MCF 10A (cell line): ENCODE measurements at regions of chr2 and their contacts with region 1.

Region 1: GRCh38 chr2:26345545-26346453 is at the start of gene SELENOI:
- DNase-seq: peak; percentile 99
- H3K4me3 Mint-ChIP-seq: peak within 1 kb of the TSS; percentile 96
- H3K27ac Mint-ChIP-seq: peak within 1 kb of the TSS; percentile 97
- H3K4me1 Mint-ChIP-seq: peaks cover 17% of the 10 kb centered on the region
- H3K27me3 Mint-ChIP-seq: no peaks in the 10 kb centered on the region
- CTCF ChIP-seq: no peak
- total RNA-seq, gene SELENOI: 43.8 and 51.0 TPM in 2 replicates

Region 2: GRCh38 chr2:26251893-26252292 is 93.9 kb before region 1 on chr2:
- CTCF ChIA-PET with region 1: interaction called, 6 read pairs
- POLR2A ChIA-PET with region 1: interaction called, 272 read pairs
- intact Hi-C with region 1: loop called (anchors 5 kb)
- DNase-seq: no peak
- H3K4me3 Mint-ChIP-seq: no peak overlapping the region
- H3K27ac Mint-ChIP-seq: no peak overlapping the region
- H3K4me1 Mint-ChIP-seq: peaks cover 4% of the 10 kb centered on the region
- H3K27me3 Mint-ChIP-seq: no peaks in the 10 kb centered on the region
- CTCF ChIP-seq: no peak

Region 3: DNA sequence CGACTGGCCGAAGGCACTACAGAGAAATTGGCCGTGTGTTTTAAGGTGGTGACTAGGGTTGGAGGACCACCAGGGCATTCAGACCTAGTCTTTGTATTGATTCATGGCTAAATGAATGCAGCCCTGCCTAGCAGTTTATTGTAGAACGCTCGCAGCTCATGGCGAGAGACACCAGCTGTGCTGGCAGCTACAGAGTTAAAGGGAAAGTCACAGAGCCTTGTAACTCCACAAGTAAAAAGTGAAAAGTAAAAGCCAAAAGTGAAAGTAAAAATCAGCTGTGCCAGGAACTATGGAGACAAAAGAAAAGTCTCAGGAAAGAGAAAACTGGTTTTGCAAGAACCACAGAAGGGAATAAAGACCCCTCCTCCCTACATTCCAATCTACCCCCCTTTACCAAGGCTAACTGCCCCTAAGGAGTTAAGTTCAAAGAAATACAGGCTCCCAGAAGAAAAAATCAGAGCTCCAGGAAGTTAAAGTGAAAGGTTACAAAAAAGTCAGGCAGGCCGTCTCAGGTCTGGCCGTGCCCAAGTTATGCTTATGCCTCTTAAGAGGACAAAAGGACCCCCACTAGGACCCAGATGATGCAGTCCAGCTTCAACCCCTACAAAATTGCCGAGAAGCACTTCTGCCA is 46.2 kb before region 1 on chr2:
- CTCF ChIA-PET with region 1: interaction called, 3 read pairs
- POLR2A ChIA-PET with region 1: interaction called, 21 read pairs
- intact Hi-C with region 1: no loop called
- DNase-seq: peak; percentile 52
- H3K4me3 Mint-ChIP-seq: no peak overlapping the region
- H3K27ac Mint-ChIP-seq: no peak overlapping the region
- H3K4me1 Mint-ChIP-seq: peaks cover 13% of the 10 kb centered on the region
- H3K27me3 Mint-ChIP-seq: no peaks in the 10 kb centered on the region
- CTCF ChIP-seq: no peak

Region 4: GRCh38 chr2:26335231-26335630 is 10.6 kb before region 1 on chr2:
- CTCF ChIA-PET with region 1: interaction called, 6 read pairs
- POLR2A ChIA-PET with region 1: interaction called, 26 read pairs
- intact Hi-C with region 1: no loop called
- DNase-seq: no peak
- H3K4me3 Mint-ChIP-seq: no peak overlapping the region
- H3K27ac Mint-ChIP-seq: no peak overlapping the region
- H3K4me1 Mint-ChIP-seq: peaks cover 2% of the 10 kb centered on the region
- H3K27me3 Mint-ChIP-seq: peaks cover 21% of the 10 kb centered on the region
- CTCF ChIP-seq: no peak

Region 5: DNA sequence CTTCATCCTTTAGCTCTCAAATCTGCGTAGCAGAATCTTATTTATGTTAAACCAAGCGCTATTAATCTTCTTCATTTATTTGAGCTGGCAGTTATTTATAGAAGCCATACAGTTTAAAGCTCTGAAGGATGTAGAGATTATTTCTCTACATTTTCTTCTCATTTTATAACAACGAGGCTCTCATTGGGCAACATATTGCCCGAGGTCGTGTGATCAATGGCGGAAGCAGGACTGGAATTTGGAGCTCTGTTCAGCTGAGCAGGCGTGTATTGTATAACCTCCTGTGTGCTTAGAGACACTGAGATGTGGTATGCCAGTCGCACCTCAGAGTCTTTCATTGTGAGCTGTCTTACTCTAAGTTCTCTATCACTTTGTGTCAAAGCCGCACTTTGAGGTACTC is 38.4 kb after region 1 on chr2:
- CTCF ChIA-PET with region 1: interaction called, 3 read pairs
- POLR2A ChIA-PET with region 1: interaction called, 11 read pairs
- intact Hi-C with region 1: no loop called
- DNase-seq: no peak
- H3K4me3 Mint-ChIP-seq: no peak overlapping the region
- H3K27ac Mint-ChIP-seq: no peak overlapping the region
- H3K4me1 Mint-ChIP-seq: peaks cover 6% of the 10 kb centered on the region
- H3K27me3 Mint-ChIP-seq: no peaks in the 10 kb centered on the region
- CTCF ChIP-seq: no peak